AG04449 (cell line): ENCODE measurements at regions of chr17 and their contacts with region 1.

Region 1: DNA sequence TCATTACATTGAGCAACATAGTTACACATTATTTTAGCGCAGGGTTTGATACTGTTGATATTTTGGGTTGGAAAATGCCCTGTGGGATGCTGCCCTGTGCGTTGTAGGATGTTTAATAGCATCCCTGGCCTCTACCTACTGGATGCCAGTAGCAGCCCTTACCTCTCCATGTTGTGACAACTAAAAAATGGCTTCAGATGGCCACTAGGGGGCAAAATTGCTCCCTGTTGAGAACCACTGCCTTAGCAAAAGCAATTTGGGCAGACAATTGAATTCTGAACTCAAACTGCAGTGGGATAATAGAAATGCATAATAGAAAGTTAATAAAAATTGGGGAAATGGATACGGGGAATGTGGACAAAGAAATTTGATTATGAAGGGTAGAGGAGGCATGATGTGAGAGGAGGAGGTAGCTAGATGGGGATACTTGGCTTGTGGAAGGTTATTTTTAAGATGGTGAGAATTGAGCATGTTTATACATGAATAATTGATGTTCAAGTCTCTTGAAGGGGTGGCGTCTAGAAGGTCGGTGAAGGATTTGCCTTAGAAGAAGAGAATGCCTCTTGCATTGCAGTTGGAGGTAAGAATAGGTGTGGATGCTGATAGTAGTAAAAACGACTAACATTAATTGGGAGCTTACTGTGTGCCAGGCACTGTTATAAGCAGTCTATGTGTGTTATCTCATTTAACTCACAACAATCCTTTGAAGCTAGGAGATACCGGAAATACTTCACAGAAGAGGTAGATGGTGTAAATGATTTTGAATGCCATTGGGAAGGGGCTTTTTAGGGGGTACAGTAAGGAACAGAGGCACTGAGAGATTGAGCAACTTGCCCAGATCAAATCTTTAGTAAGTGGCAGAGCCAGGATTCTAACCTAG is 19.0 kb downstream of the HEATR9 start:
- DNase-seq: peak; percentile 10
- H3K4me3 ChIP-seq: no peak overlapping the region
- CTCF ChIP-seq: peak; percentile 62

Region 2: DNA sequence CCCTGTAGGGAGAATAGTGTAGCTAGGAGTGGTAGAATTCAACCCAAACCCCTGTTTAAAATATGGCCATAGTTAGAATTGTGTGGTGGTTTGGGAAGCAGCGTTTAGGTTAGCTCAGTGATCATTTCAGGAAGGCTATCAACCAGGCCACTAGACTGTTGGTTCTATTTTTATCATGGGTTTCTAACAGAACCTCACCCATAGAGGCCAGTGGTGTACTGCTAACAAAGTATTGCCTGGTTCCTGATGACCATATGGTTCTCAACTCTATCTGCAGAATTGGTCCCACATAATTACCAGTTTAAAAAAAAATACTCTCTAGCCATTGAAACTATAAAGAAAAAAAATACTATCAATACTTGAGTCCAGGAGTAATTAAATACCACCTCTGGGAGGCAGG is 188.8 kb before region 1 on chr17:
- CTCF ChIA-PET with region 1: no interaction called
- POLR2A ChIA-PET with region 1: no interaction called
- DNase-seq: no peak
- H3K4me3 ChIP-seq: no peak overlapping the region
- CTCF ChIP-seq: no peak

Region 3: DNA sequence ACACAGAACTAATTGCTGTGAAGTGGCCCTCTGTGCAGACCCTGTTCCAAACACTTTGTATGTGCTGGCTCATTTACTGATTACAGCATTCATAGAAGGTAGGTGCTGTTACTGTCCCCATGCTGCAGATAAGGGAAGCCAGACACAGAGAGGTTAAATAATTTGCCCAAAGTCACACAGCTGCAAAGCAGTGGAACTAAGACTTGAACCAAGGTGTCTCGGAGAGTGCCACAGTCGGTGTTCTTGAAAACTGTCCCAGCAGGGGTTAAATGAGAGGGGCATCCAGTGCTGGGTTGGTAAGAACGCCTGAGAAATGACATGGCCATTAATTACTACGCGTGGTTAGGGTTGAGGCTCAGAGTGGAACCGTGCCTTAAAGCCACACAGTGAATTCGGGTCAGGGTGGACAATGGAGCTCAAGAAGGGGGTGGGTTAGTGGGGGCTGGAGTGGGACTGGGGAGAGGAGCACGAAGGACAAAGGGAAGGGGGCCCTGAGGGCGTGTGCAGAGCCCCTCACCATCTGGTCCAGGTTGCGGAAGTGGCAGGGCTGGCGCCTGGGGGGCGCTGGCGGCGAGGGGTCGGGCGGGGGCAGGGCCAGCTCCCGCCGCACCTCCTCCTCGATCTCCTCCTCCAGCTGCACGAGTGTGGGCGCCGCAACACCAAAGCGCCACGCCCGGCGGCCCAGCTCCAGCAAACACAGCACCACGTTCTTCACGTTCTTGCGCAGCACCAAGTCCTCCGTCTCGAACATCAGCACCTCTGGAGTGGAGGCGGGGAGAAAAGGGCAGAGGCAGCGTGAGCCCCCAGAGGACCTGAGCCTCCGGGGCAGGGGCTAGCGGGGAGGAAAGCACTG is 99.9 kb before region 1 on chr17:
- CTCF ChIA-PET with region 1: no interaction called
- POLR2A ChIA-PET with region 1: no interaction called
- DNase-seq: no peak
- H3K4me3 ChIP-seq: peak overlapping the region; percentile 30
- CTCF ChIP-seq: no peak

Region 4: DNA sequence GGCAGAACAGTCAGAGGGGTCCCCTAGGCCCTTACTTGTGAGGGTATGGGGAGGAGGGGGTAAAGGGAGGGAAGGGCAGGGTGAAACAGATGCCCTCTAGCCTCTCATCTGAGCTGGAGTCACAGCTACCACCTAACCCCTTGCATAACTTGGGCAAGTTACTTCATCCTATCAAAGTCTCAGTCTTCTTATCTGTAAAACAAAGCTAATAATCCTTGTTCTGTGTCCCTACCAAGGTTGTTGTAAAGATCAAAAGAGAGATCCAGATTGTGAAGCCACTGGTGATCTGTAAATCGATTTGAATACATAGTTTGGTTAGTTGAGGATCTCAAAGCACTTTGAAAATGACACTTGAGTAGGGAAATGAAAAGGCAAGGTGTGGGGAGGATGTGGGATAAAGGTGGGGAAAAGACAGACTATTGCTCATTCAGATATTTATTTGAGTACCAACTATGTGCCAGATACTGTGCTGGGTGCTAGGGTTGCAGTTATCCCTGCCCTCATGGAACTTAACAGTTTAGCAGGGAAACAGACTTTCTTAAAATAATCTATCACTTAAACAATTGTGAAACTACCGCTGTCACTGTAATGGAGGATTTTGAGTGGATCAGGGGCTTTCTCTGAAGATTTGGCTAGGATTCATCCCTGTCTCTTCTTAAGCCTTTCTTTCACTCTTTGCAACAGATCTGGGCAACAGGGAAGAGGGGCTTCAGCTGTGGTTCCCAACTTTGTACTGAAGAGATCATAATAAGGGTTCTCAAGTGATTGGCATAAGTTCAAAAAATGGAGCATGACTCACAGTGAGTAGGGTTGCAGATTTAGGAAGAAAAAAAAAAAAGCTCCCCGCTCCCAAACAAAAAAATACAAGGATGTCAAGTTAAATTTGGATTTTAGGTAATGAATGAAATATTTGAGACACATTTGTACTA is 16.0 kb after region 1 on chr17:
- CTCF ChIA-PET with region 1: interaction called, 19 read pairs
- POLR2A ChIA-PET with region 1: no interaction called
- DNase-seq: no peak
- H3K4me3 ChIP-seq: no peak overlapping the region
- CTCF ChIP-seq: no peak